Common myeloid progenitor, CD34-positive (primary cell): ENCODE measurements at regions of chr14 and their contacts with region 1.

Region 1: GRCh38 chr14:100192672-100193416 is 33.4 kb upstream of the DEGS2 start:
- DNase-seq: peak; percentile 98 to 99 (median 99)
- H3K4me3 ChIP-seq: peak overlapping the region in 6 of 7 experiments; percentile 25 to 70 (median 52)
- H3K27ac ChIP-seq: peak overlapping the region; percentile 54 to 77
- H3K4me1 ChIP-seq: peaks cover 0 to 18% (median 14%) of the 10 kb centered on the region in 4 experiments
- H3K27me3 ChIP-seq: no peaks in the 10 kb centered on the region

Region 2: DNA sequence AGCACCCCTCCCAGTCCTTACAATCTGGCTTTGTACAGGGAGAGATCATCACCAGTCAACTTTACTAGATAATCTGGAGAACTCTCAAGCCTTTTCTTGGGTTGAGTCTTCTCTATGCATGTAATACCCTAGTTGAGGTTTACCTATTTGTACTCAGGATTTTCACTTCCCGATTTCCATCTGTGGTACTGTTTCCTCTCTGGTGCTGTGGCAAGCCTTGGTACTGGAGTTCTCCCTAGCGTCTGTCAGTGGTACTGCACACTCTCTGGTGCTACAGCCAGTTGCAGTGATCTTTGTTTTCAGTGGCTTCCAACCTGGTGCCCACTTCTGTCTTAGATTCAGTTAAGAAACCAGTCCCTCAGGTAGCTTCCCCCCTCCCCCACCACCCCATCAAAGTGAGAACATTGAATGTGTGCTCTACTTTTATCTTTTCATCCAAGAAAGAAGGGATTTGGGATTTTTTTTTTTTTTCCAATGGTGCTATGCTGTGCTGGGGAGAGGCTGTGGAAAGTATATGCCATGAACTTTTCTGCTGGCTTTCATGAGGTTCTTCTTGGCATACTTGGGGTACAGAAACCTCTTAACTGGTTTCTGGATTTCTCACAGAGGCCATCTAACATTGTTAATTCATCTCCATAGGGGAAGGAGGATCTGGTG is 197.0 kb before region 1 on chr14:
- CTCF ChIA-PET with region 1: no interaction called
- POLR2A ChIA-PET with region 1: no interaction called
- DNase-seq: peak; percentile 80 to 87 (median 87)
- H3K4me3 ChIP-seq: no peak overlapping the region
- H3K27ac ChIP-seq: no peak overlapping the region
- H3K4me1 ChIP-seq: no peaks in the 10 kb centered on the region
- H3K27me3 ChIP-seq: no peaks in the 10 kb centered on the region

Region 3: GRCh38 chr14:100078991-100079725 is 113.7 kb before region 1 on chr14:
- CTCF ChIA-PET with region 1: interaction called, 11 read pairs
- POLR2A ChIA-PET with region 1: no interaction called
- DNase-seq: peak; percentile 73 to 95 (median 93)
- H3K4me3 ChIP-seq: peak overlapping the region in 5 of 7 experiments; percentile 15 to 57 (median 26)
- H3K27ac ChIP-seq: peak overlapping the region; percentile 62 to 65
- H3K4me1 ChIP-seq: peaks cover 45 to 95% (median 88%) of the 10 kb centered on the region in 4 experiments
- H3K27me3 ChIP-seq: no peaks in the 10 kb centered on the region

Region 4: GRCh38 chr14:100129161-100129681 is 63.6 kb before region 1 on chr14:
- CTCF ChIA-PET with region 1: interaction called, 15 read pairs
- POLR2A ChIA-PET with region 1: no interaction called
- DNase-seq: no peak
- H3K4me3 ChIP-seq: no peak overlapping the region
- H3K27ac ChIP-seq: no peak overlapping the region
- H3K4me1 ChIP-seq: no peaks in the 10 kb centered on the region
- H3K27me3 ChIP-seq: no peaks in the 10 kb centered on the region

Region 5: DNA sequence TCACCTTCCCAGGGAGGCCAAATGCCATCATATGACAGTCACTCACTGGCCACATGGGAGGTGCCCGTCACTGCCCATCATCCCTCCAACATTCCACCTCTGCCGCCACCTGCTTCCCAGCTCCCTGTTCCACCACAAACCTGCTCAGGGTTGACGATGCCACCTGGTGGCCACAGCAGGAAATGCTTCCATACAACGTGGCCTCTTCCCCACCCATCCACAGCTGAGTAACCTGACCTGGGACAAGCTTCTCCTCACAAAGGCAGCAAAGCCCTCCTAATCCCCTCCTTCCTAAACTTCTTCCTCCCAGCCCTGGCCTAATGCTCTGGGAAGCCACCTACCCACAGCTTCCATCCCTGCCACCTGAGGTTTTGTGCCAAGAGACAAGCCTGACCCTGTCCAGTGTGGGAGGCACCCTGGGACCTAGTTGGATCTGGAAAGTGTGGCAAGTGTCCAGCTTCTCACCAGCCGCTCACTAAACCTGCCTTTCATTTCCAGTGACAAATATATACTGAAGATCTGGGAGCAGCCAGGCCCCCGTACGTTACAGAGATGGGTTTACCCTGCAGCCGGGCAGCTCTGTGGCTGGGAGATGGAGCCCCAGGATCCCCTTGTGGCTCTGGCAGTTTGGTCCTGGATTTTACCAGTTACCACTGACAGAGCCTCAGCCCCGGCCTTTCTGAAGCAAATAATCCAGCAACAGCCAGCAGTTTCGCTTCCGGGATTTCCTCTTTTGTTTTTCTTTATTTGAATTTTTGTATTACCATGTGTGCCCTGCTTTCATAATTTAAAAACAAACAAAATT is 37.6 kb before region 1 on chr14:
- CTCF ChIA-PET with region 1: interaction called, 29 read pairs
- POLR2A ChIA-PET with region 1: no interaction called
- DNase-seq: peak; percentile 42 to 62 (median 51)
- H3K4me3 ChIP-seq: no peak overlapping the region
- H3K27ac ChIP-seq: no peak overlapping the region
- H3K4me1 ChIP-seq: peaks cover 0 to 17% (median 13%) of the 10 kb centered on the region in 4 experiments
- H3K27me3 ChIP-seq: peaks cover 0 to 22% (median 7%) of the 10 kb centered on the region in 5 experiments

Region 6: GRCh38 chr14:100239840-100240724 is 47.2 kb after region 1 on chr14:
- CTCF ChIA-PET with region 1: interaction called, 6 read pairs
- POLR2A ChIA-PET with region 1: interaction called, 10 read pairs
- DNase-seq: peak; percentile 83 to 92 (median 90)
- H3K4me3 ChIP-seq: peak overlapping the region; percentile 86 to 100 (median 96)
- H3K27ac ChIP-seq: peak overlapping the region; percentile 58 to 98
- H3K4me1 ChIP-seq: peaks cover 25 to 48% (median 38%) of the 10 kb centered on the region in 4 experiments
- H3K27me3 ChIP-seq: no peaks in the 10 kb centered on the region

Region 7: GRCh38 chr14:100256339-100256895 is 63.6 kb after region 1 on chr14:
- CTCF ChIA-PET with region 1: no interaction called
- POLR2A ChIA-PET with region 1: no interaction called
- DNase-seq: no peak
- H3K4me3 ChIP-seq: no peak overlapping the region
- H3K27ac ChIP-seq: no peak overlapping the region
- H3K4me1 ChIP-seq: peaks cover under 1 to 3% (median 3%) of the 10 kb centered on the region in 4 experiments
- H3K27me3 ChIP-seq: no peaks in the 10 kb centered on the region

Region 8: GRCh38 chr14:100285021-100285912 is 92.4 kb after region 1 on chr14:
- CTCF ChIA-PET with region 1: no interaction called
- POLR2A ChIA-PET with region 1: no interaction called
- DNase-seq: peak; percentile 74 to 87 (median 85)
- H3K4me3 ChIP-seq: peak overlapping the region; percentile 56 to 84 (median 71)
- H3K27ac ChIP-seq: peak overlapping the region; percentile 50 to 82
- H3K4me1 ChIP-seq: peaks cover 0 to 13% (median 11%) of the 10 kb centered on the region in 4 experiments
- H3K27me3 ChIP-seq: no peaks in the 10 kb centered on the region

Region 9: DNA sequence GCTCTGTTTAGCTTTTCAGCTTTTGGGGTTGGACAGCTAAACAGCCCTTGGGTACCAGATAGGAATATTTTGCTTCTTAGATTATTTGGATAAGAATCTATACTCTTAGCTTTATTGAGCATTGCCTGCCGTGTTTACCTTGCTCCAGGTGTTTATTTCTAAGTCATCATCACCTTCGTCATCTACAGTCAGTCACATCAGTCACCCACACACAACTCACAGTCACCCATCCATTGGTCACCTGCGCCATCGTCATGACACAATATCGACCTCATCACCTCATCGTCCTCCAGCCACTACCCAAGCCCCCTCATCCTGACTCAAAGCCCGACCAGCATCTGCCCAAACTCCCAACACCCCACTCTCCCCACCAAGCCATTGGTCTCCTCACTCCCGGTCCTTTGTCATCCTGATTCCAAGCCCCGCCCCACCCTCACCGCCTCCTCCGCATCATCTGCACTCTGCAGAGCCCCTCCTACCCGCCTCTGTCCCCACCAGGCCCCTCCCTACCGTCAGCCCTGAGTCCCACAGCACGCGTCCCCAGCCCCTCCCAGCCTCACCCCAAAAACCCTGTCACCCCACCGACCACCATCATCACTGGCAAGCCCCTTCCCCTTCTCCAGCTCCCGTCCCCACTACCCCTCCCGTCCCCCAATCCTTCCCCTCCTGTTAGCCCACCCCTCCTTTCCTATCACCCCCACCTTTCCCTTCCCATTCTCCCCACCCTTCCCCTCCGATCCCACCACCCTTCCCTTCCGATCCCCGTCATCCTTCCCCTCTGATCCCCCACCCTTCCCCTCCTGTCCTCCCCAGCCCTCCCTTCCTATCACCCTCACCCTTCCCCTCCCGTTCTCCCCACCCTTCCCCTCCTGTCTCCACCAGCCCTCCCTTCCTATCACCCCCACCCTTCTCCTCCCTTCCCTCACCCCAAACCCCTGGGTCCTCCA is 543.7 kb after region 1 on chr14:
- CTCF ChIA-PET with region 1: no interaction called
- POLR2A ChIA-PET with region 1: no interaction called
- DNase-seq: no peak
- H3K4me3 ChIP-seq: no peak overlapping the region
- H3K27ac ChIP-seq: no peak overlapping the region
- H3K4me1 ChIP-seq: no peaks in the 10 kb centered on the region
- H3K27me3 ChIP-seq: no peaks in the 10 kb centered on the region